Activated CD8-positive, alpha-beta memory T cell treated with anti-CD3 and anti-CD28 coated beads, Interleukin-2, amount 10 ng/mL, durations not matched to agents 7 days and 5 days (primary cell): ENCODE measurements at regions of chr19 and their contacts with region 1.

Region 1: GRCh38 chr19:58513694-58514563 is 2.1 kb upstream of the SLC27A5 start:
- DNase-seq: peak; percentile 97
- ATAC-seq: peak; percentile 94
- H3K4me3 Mint-ChIP-seq: peak overlapping the region; percentile 79
- H3K27ac Mint-ChIP-seq: peak overlapping the region; percentile 88
- H3K4me1 Mint-ChIP-seq: peaks cover 48% of the 10 kb centered on the region
- H3K27me3 Mint-ChIP-seq: no peaks in the 10 kb centered on the region

Region 2: GRCh38 chr19:58492265-58492664 is 21.7 kb before region 1 on chr19:
- CTCF ChIA-PET with region 1: interaction called, 30 read pairs
- DNase-seq: no peak
- ATAC-seq: no peak
- H3K4me3 Mint-ChIP-seq: no peak overlapping the region
- H3K27ac Mint-ChIP-seq: no peak overlapping the region
- H3K4me1 Mint-ChIP-seq: peaks cover 25% of the 10 kb centered on the region
- H3K27me3 Mint-ChIP-seq: no peaks in the 10 kb centered on the region

Region 3: DNA sequence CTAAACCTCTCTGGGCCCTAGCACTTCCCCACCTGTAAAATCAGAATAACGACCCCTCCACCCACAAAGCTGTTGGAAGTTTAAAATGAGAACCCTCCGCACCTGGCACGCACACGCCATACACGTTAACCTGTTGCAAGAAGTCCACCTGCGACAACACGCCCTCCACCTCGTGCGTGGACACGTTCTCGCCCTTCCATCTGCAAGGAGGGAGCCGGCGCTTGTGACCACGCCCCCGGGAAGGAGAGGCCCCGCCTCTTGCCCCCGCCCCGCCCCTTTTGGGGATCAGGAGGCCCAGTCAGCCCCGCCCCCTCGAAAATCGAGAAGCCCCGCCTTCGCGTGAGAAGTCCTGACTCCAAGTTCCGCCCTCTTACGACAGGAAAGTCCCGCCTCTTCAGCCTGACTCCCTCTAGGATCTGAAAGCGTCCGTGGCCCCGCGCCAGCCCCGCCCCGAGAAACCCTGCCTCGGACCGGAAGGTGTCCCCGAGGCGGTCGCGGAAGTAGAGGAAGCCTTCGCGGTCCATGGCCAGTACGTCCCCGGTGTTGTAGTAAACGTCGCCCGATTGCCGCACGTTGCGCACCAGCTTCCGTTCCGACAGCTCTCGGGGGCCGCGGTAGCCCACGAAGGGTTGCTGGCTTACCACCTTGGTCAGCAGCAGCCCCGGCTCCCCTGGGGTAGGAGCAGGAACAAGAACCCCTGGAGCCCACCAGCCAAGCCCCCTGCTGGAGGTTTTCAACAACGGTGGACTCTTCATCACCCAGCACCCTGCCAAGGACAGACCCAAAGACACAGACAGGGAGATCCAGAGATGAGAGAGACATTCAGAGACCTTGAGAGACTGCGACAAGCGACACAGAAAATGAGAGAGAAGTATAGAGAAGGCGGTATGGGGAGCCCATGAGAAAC is 14.7 kb before region 1 on chr19:
- CTCF ChIA-PET with region 1: interaction called, 30 read pairs
- DNase-seq: peak; percentile 100
- ATAC-seq: peak; percentile 96
- H3K4me3 Mint-ChIP-seq: peak overlapping the region; percentile 80
- H3K27ac Mint-ChIP-seq: peak overlapping the region; percentile 88
- H3K4me1 Mint-ChIP-seq: peaks cover 33% of the 10 kb centered on the region
- H3K27me3 Mint-ChIP-seq: peaks cover 5% of the 10 kb centered on the region

Region 4: DNA sequence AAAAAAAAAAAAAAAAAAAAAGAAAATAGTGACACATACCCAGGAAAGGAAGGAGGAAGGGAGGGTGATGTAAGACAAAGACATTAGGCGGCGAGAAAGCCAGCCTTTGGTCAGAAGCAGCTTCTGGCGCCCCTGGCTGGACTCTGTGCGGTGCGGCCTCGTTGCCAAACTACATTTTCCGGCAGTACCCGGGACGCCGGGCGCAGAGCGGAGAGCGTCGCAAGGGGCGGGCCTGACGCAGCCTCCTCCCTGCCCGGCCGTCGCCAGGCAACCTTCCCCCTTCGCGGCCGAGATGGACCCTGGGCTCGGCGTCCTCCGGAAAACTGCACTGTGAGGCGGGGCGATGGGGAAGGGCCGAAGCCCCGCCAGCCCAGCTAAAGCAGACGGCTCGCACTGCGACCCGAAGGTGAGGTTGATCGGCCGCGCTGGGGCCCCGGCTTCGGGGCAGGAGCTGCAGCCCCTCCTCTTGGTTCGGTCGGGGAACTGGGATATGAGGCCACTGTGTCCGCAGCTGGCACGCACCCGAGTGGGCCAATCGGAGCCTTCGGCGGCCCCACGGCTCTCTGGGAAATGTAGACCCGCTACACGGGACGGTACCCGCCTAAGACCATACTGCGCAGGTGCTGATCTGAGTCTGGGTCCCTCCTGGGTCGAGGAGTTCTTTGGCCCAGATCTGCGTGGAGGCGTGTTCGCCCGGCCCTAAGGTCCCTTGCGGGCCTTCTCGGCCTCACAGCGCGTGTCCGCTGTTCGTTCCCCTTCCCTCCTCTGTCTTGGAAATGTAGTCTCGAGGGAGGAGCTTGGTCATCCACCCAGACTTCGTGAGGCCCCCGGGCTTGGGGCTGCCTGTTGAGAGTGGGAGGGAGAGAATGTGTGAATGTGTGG is 61.5 kb after region 1 on chr19:
- CTCF ChIA-PET with region 1: interaction called, 153 read pairs
- DNase-seq: peak; percentile 91
- ATAC-seq: peak; percentile 46
- H3K4me3 Mint-ChIP-seq: peak overlapping the region; percentile 82
- H3K27ac Mint-ChIP-seq: peak overlapping the region; percentile 84
- H3K4me1 Mint-ChIP-seq: peaks cover 37% of the 10 kb centered on the region
- H3K27me3 Mint-ChIP-seq: no peaks in the 10 kb centered on the region

Region 5: GRCh38 chr19:58581227-58582151 is 67.6 kb after region 1 on chr19:
- CTCF ChIA-PET with region 1: interaction called, 153 read pairs
- DNase-seq: peak; percentile 95
- ATAC-seq: peak; percentile 96
- H3K4me3 Mint-ChIP-seq: no peak overlapping the region
- H3K27ac Mint-ChIP-seq: peak overlapping the region; percentile 79
- H3K4me1 Mint-ChIP-seq: peaks cover 17% of the 10 kb centered on the region
- H3K27me3 Mint-ChIP-seq: no peaks in the 10 kb centered on the region